Ovary (tissue), 10 donors: ENCODE measurements at regions of chr13 and their contacts with region 1.

Region 1: GRCh38 chr13:27374650-27375049 is 49.8 kb upstream of the GTF3A start:
- DNase-seq: peak; percentile 50 to 68 (median 62)
- H3K4me3 ChIP-seq: no peak overlapping the region
- H3K27ac ChIP-seq: no peak overlapping the region
- H3K4me1 ChIP-seq: peaks cover 1% of the 10 kb centered on the region
- H3K27me3 ChIP-seq: no peaks in the 10 kb centered on the region
- CTCF ChIP-seq: peak; percentile 35 to 55 (median 44)
- EP300 ChIP-seq: no peak
- POLR2A ChIP-seq: no peak

Region 2: DNA sequence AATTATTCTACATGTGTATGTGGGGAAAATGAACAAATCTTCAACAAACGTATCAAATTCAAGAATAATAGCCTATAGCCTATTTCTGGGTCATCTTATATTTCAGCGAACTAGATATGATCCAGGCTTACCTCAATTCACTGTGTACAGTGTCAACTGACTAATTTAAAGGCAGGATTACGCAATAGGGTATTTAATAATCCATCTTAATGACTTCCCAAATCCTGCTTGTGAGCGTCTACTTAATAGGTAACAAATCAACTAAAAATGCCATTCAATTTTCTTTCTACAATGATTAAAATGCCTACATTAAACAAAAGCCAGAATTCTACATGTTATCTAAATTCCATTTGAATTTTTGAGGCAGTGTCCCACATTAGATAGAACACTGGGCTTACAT is 270.0 kb before region 1 on chr13:
- intact Hi-C with region 1: no loop called
- DNase-seq: no peak
- H3K4me3 ChIP-seq: no peak overlapping the region
- H3K27ac ChIP-seq: no peak overlapping the region
- H3K4me1 ChIP-seq: no peaks in the 10 kb centered on the region
- H3K27me3 ChIP-seq: no peaks in the 10 kb centered on the region
- CTCF ChIP-seq: no peak
- EP300 ChIP-seq: no peak
- POLR2A ChIP-seq: no peak

Region 3: DNA sequence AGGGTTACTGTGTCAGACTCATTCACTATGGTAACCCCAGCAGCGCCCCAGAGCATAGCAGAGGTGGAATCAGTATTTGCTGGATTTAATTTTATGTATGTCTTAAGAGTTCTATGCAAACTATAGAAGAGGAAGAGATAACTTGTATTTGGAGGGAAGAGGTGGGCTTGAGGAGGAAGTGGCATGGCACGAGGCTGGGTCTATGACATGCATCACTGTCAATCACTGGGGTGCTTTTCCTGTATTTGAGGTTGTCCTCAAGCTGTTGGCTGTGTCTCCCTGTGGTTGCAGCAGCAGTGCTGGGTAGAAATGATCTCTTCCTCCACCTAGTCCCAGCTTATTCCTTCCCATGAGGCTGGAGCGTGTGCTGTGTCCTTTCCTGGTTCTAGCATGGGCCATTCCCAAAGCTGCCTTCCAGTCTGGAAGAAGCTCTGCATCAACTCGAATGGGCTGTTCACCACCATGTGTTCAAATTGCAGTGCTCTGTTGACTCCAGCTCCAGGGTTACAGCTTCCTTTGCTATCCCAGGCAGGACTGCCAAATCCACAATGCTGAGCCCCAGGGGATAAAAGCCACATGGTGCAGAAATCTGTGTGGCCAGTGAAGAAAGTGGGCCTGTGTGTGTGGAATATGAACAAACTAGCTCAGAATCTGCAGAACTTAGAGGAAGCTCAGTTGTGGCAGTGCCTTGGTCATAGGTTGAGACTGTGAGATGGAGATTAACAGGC is 148.9 kb after region 1 on chr13:
- intact Hi-C with region 1: loop called in 1 of 4 experiments (anchors 10 kb)
- DNase-seq: no peak
- H3K4me3 ChIP-seq: no peak overlapping the region
- H3K27ac ChIP-seq: no peak overlapping the region
- H3K4me1 ChIP-seq: no peaks in the 10 kb centered on the region
- H3K27me3 ChIP-seq: no peaks in the 10 kb centered on the region
- CTCF ChIP-seq: no peak
- EP300 ChIP-seq: no peak
- POLR2A ChIP-seq: no peak

Region 4: DNA sequence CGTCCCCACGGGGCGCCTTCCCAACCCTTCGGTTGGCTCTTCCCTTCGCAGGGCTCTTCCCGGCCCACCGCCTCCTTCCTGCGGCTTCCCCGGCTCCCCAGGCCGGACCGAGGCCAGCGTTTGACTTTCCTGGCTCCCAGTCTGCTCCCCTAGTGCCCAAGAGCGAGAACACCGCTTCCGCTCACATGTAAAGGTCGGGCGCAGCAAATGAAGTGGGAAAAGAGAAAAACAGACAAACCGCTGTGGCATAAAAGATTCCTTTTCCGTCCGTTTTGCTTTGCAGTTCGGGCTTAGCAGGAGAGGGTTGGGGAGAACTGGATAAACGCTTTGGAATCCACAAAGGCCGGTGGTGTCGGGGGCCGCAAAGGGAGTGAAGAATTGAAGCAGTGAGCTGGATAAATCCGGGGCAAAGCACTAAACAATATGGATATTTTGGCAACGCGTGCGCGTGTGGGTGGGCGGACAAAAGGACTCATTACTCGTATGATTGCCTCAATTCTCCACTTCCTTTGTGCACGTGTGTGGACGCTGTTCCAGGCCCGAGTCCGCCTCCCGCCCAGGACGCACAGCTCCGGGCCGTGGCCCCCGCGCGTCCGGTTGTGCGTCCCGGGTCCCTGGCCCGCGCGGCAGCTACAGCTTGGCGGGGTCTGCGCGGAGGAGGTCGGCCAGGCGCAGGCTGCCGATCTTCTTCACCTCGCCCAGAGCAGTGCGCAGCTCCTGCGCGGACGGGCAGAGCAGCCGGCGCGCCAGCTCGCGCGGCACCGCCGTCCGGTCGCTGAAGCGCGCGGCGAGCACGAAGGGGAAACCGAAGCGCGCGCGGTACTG is 603.0 kb after region 1 on chr13:
- intact Hi-C with region 1: loop called in 3 of 4 experiments (anchors 5 to 10 kb)
- DNase-seq: no peak
- H3K4me3 ChIP-seq: peak overlapping the region; percentile 8
- H3K27ac ChIP-seq: no peak overlapping the region
- H3K4me1 ChIP-seq: no peaks in the 10 kb centered on the region
- H3K27me3 ChIP-seq: no peaks in the 10 kb centered on the region
- CTCF ChIP-seq: no peak
- EP300 ChIP-seq: no peak
- POLR2A ChIP-seq: no peak